Activated B cell treated with CpG ODN at 0.5 μM for 24 hours (primary cell): ENCODE measurements at regions of chr1 and their contacts with region 1.

Region 1: DNA sequence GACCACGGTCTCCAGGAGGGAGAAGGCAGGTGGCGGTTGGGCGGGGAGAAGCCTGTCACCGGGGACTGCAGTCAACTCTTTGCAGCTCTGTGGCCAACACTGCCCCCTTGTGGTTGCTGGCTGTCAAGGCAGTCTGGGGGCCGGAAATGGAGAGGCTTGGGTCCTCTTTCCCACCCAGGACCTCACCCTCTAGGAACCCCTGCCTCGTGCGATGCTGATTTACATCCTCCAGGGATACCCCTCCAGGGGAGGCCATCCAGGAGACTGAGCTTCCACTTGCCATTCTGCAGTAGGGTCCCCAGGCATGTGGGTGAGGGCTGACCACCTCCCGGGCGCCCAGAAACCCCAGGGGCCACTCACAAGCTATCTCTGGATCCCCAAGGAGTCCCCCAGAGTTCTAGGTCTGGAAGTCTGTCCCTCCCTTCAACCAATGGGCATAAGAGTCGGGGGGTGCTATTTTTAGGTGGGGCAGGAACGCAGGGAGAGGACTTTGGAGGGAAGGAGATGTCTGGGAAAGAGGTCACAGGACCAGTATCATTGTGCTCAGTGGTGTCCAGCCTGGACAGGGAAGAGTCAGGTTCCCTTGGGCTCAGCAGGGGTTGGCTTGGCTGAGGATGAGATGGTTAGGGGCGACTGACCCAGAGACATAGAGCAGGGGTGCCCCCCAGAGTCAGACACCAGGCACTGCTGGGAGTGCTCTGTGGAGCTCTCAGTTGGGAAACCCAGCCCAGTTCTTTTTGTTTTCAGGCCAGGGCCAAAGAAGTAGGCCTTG is 7.1 kb upstream of the GPR61 start:
- DNase-seq: peak; percentile 82
- ATAC-seq: peak; percentile 93
- H3K4me3 Mint-ChIP-seq: peak overlapping the region; percentile 77
- H3K27ac Mint-ChIP-seq: peak overlapping the region; percentile 74
- H3K4me1 Mint-ChIP-seq: peaks cover 8% of the 10 kb centered on the region
- H3K27me3 Mint-ChIP-seq: no peaks in the 10 kb centered on the region
- CTCF ChIP-seq: no peak

Region 2: DNA sequence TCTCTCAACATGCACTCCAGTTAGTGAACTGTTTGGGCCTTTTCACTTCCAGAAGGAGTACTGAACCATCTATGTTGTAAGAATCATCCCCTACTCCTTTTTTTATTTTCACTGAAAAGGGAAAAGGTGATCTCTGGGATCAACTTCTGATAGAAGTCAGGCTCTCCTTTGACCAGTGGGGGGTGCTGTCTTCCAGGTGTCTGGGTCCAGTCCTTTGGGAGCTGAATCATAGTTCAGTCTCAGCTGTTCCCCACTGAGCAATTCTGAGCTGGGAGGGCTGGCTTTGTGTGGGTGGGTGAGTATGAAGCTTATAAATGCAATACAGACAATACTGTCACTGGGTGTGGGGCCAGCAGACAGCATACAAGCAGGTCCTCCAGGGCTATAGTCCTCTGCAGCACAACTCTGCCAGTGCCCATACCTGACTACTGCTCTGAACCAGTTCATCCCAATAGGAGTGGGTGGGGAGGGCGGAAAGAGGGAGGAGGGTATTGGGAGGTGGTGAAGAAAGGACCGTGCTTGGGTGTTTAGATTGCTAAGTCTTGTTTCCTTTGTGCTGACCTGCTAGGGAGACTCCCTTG is 331.3 kb before region 1 on chr1:
- CTCF ChIA-PET with region 1: interaction called, 4 read pairs
- POLR2A ChIA-PET with region 1: no interaction called
- intact Hi-C with region 1: loop called (anchors 1 kb)
- DNase-seq: no peak
- ATAC-seq: peak; percentile 69
- H3K4me3 Mint-ChIP-seq: no peak overlapping the region
- H3K27ac Mint-ChIP-seq: no peak overlapping the region
- H3K4me1 Mint-ChIP-seq: peaks cover 9% of the 10 kb centered on the region
- H3K27me3 Mint-ChIP-seq: no peaks in the 10 kb centered on the region
- CTCF ChIP-seq: no peak

Region 3: DNA sequence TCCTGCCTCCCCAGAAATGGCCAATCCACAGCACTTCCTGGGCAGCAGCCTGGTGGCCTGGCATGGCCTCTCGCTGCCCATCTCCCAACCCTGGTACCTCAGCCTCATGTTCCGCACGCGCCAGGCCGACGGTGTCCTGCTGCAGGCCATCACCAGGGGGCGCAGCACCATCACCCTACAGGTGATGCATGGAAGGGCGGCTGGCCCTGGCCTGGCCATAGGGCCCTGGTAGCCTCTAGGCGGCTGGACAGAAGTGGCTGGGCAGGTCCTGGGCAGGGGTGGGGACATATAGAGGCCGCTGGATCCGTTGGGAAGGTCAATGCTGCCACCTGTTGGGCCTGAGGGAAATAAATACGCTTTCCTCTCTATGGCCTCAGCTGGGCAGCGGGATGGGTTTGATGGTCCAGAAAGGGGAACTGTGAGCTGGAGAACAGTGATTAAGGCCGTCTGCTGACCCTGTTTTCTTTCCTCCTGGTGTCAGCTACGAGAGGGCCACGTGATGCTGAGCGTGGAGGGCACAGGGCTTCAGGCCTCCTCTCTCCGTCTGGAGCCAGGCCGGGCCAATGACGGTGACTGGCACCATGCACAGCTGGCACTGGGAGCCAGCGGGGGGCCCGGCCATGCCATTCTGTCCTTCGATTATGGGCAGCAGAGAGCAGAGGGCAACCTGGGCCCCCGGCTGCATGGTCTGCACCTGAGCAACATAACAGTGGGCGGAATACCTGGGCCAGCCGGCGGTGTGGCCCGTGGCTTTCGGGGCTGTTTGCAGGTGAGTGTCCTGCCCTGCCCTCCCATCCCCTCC is 268.8 kb before region 1 on chr1:
- CTCF ChIA-PET with region 1: interaction called, 5 read pairs
- POLR2A ChIA-PET with region 1: no interaction called
- intact Hi-C with region 1: loop called (anchors 1 kb)
- DNase-seq: peak; percentile 63
- ATAC-seq: peak; percentile 97
- H3K4me3 Mint-ChIP-seq: no peak overlapping the region
- H3K27ac Mint-ChIP-seq: no peak overlapping the region
- H3K4me1 Mint-ChIP-seq: peaks cover 4% of the 10 kb centered on the region
- H3K27me3 Mint-ChIP-seq: peaks cover 2% of the 10 kb centered on the region
- CTCF ChIP-seq: no peak

Region 4: GRCh38 chr1:109397538-109398342 is 134.8 kb before region 1 on chr1 and contains the start of gene SORT1:
- CTCF ChIA-PET with region 1: interaction called, 17 read pairs
- POLR2A ChIA-PET with region 1: no interaction called
- intact Hi-C with region 1: loop called (anchors 1 kb)
- DNase-seq: peak; percentile 54
- ATAC-seq: peak; percentile 93
- H3K4me3 Mint-ChIP-seq: peak within 1 kb of the TSS; percentile 83
- H3K27ac Mint-ChIP-seq: no peak within 1 kb of the TSS
- H3K4me1 Mint-ChIP-seq: peaks cover 19% of the 10 kb centered on the region
- H3K27me3 Mint-ChIP-seq: peaks cover 45% of the 10 kb centered on the region
- CTCF ChIP-seq: no peak
- total RNA-seq, gene SORT1: 0.20 and 0.37 TPM in 2 replicates

Region 5: DNA sequence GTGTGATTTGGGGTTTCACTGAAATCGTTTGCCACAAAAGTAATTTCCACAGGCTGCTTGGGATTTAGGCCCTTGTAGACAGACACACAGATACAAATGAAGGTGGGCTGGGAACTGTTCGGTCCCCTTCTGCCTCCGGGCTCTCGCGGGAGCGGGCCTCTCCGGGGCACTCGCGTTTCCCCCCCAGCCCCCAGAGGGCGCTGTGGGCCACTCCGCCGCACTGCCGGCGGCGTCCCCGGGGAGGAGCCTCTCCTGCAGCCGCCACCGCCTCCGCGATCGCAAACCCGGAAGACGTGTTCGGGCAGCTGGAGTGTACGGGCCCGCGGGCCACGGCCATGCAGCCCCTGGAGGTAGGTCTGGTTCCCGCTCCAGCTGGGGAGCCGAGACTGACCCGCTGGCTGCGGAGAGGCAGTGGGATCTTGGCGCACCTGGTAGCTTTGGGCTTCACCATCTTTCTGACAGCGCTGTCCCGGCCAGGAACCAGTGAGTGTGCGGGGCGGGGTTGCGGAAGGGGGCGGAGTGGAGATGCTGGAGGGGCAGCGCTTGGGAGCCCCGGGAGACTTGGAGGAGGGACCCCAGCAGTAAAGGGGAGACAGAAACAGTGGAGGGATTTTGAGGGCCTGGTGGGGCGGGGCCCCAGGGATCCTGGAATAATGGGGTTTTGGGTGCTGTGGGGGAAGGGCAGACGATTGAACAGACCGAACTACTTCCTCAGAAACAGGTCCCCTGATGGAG is 38.6 kb before region 1 on chr1 and contains the start of gene CYB561D1:
- CTCF ChIA-PET with region 1: interaction called, 375 read pairs
- POLR2A ChIA-PET with region 1: interaction called, 6 read pairs
- intact Hi-C with region 1: loop called (anchors 1 kb)
- DNase-seq: peak; percentile 95
- ATAC-seq: peak; percentile 89
- H3K4me3 Mint-ChIP-seq: peak within 1 kb of the TSS; percentile 98
- H3K27ac Mint-ChIP-seq: peak within 1 kb of the TSS; percentile 91
- H3K4me1 Mint-ChIP-seq: peaks cover 43% of the 10 kb centered on the region
- H3K27me3 Mint-ChIP-seq: no peaks in the 10 kb centered on the region
- CTCF ChIP-seq: peak; percentile 81
- total RNA-seq, gene CYB561D1: 17.1 and 18.1 TPM in 2 replicates